Gastrocnemius medialis (tissue), 4 donors: ENCODE measurements at regions of chr9 and their contacts with region 1.

Region 1: DNA sequence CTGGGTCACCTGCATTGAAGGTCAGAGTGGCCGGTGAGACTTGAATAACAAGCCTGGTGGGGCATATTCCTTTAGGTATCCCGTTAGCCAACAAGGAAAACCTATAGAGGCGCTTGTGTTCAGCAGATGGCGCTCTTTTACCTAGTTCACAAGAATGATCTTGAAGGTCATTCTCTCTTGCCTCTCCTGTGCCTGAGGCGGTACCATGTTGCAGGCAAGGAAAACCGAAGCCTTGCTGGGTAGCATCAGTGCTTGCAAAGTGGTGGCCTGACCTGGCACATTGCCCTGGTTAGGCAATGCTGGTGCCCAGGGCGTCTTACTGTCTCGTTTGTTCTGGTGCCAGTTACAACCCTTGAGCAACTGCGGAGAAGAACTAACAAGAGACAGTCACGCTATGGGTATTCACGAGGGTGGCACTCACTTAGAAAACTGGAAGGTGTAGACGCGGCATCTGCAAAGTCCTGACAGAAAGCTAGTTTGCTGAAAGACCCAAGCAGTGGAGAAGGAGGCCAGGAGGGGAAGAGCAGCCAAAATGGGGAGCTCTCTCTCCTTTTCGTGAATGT is 56.7 kb downstream of the AOPEP start:
- DNase-seq: peak; percentile 92 to 99
- ATAC-seq: peak; percentile 94 to 95
- H3K4me3 ChIP-seq: no peak overlapping the region
- H3K27ac ChIP-seq: peak overlapping the region; percentile 53 to 81 (median 74)
- H3K4me1 ChIP-seq: peaks cover 11 to 26% of the 10 kb centered on the region in 2 donors
- H3K27me3 ChIP-seq: no peaks in the 10 kb centered on the region
- CTCF ChIP-seq: peak; percentile 73 to 81 (median 79)
- POLR2A ChIP-seq: peak in 1 of 2 donors; percentile 32

Region 2: DNA sequence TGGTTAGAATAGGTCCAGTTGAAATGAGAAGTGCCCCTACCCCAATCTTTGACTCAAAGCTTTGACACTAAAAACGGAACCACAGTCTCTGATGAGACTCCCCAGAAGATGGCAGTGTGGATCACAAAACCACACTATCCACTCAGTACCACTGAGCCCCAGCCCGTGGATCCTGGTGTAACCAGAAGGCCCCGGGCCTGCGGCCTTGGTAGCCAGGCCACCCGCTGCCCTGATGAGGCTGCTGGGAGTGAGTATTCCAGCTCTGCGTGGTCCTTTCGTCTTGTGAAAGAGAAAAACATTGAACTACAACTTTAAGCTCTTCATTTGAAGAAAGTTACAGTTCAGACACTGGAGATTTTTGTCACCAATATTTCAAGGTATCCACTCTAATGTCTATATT is 101.7 kb before region 1 on chr9:
- in situ Hi-C with region 1: no loop called
- intact Hi-C with region 1: loop called (anchors 5 kb)
- DNase-seq: peak; percentile 54 to 64
- ATAC-seq: peak; percentile 96 to 99
- H3K4me3 ChIP-seq: no peak overlapping the region
- H3K27ac ChIP-seq: peak overlapping the region in 1 of 4 donors; percentile 44
- H3K4me1 ChIP-seq: no peaks in the 10 kb centered on the region
- H3K27me3 ChIP-seq: no peaks in the 10 kb centered on the region
- CTCF ChIP-seq: peak; percentile 46 to 77 (median 72)
- POLR2A ChIP-seq: no peak

Region 3: DNA sequence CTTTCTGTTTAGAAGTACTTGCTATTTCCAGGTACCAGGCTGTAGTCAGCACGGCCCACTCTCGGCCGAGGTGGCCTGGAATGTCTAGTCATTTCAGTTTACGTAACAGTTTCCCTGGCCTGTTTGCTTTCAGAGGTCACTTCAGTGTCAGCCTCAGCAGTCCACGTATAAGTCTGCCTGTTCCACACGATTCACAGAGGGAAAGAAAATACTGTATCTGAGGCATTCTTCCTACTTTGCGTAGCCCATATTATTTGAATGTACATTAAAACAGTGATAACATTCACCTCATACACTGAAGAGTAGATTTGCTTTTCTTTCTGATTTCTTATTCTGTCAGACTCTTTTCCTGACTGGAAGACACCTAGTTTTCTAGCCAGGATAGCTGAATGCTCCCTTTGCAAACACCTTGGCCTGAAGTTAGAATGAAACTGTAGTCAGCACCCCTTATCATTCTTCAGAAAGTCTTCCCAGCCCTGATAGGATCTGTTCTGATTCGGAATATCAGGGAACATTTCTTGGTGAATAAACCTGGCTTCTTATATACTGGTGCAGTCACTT is 84.2 kb after region 1 on chr9:
- in situ Hi-C with region 1: no loop called
- intact Hi-C with region 1: loop called (anchors 2 kb)
- DNase-seq: peak; percentile 61 to 85
- ATAC-seq: peak; percentile 80 to 86
- H3K4me3 ChIP-seq: peak overlapping the region in 3 of 4 donors; percentile 16 to 30 (median 20)
- H3K27ac ChIP-seq: peak overlapping the region; percentile 89 to 96 (median 94)
- H3K4me1 ChIP-seq: peaks cover 73 to 76% of the 10 kb centered on the region in 2 donors
- H3K27me3 ChIP-seq: no peaks in the 10 kb centered on the region
- CTCF ChIP-seq: no peak
- POLR2A ChIP-seq: no peak

Region 4: DNA sequence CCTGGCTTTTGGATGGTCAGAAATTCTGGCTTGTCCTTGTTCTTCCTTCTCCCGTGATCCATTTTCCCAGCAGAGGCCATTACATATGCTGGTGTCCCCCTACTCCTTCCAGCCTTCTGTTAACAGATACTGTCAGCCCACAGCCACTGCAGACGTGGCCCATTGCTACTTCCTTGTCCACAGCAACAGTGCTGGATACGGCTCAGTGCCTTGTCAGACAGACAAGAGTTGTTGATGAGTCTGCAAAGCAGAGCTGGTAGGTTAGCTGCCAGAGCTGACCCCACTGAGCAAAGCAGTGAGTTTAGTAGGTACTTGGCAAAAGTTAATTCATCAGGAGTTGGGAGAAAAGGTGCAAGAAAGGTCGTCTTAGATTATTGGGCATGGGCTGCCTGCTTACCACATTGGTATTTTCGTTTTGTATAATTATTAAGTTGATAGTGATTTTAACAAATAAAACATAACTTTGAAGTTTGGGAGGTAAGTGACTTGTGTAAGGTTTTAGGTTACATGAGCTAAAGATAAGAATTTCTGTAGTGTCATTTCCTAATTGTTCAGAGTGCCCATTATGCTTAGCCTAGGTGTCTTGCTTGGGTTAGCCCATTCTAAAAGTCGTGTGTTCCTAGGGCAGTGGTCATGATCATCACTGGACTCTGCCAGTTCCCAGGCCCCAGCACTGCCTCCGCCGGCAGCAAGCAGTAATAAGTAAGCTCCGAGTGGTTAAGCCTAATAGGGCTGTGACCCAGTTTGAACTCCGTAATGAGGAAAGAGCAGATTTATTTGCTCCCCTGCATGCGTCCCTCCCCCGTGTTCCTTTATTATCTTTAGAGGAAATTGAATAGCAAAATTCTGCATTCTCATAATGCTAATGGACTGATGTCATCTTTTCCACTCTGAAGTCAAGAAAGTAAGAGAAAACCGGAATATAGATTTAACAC is 242.3 kb after region 1 on chr9:
- in situ Hi-C with region 1: loop called in 1 of 4 experiments (anchors 25 kb)
- intact Hi-C with region 1: loop called (anchors 5 kb)
- DNase-seq: peak; percentile 80 to 88
- ATAC-seq: peak; percentile 76 to 78
- H3K4me3 ChIP-seq: peak overlapping the region in 1 of 4 donors; percentile 16
- H3K27ac ChIP-seq: peak overlapping the region; percentile 95 to 98 (median 97)
- H3K4me1 ChIP-seq: peaks cover 95 to 97% of the 10 kb centered on the region in 2 donors
- H3K27me3 ChIP-seq: no peaks in the 10 kb centered on the region
- CTCF ChIP-seq: peak in 4 of 5 experiments; percentile 16 to 49 (median 33)
- POLR2A ChIP-seq: peak in 1 of 2 donors; percentile 38

Region 5: GRCh38 chr9:95073021-95073607 is 289.9 kb after region 1 on chr9:
- in situ Hi-C with region 1: no loop called
- intact Hi-C with region 1: loop called (anchors 5 kb)
- DNase-seq: peak; percentile 53 to 78
- ATAC-seq: peak; percentile 67 to 72
- H3K4me3 ChIP-seq: no peak overlapping the region
- H3K27ac ChIP-seq: peak overlapping the region; percentile 85 to 96 (median 91)
- H3K4me1 ChIP-seq: peaks cover 92 to 95% of the 10 kb centered on the region in 2 donors
- H3K27me3 ChIP-seq: no peaks in the 10 kb centered on the region
- CTCF ChIP-seq: peak in 4 of 5 experiments; percentile 18 to 54 (median 52)
- POLR2A ChIP-seq: no peak

Region 6: DNA sequence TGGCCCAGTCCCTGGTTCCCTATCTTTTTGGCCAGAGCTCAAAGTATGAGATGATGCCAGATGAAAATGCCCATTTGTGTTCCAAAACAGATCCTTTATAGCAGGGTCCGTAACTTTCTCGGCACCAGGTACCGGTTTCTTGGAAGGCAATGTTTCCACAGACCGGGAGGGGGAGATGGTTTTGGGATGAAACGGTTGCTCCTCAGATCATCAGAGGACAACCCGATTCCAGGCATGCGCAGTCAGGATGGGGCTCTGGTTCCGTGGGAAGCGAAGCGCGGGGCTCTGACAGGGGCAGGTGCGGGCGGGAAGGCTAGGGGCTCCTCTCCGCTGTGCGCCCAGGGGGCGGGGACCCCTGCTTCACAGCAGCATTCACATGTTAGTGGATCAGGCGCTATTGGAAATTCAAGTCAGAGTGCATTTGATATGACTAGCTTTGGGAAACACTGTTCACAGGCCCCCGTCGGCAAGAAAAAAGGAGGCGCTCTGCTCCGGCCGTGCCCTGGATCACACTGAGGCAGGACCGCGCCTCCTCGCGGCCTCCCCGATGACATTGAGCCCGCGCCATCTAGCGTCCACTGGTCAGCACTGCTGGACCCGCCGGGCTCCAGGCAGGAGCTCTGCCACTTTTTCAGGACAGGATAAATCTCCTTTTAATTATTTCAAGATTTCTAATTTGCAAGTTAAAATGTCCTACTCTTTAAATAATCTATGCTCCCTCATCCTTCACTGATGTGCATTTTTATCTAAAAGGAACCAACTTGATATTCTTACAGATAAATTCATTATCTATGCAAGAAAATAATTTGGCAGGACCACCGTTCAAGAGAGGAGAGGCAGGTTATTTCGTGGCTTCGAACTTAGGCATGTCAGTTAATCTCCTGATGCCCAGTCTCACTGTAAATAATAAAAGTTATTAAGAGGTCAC is 344.3 kb after region 1 on chr9:
- in situ Hi-C with region 1: loop called (anchors 5 to 10 kb)
- intact Hi-C with region 1: loop called (anchors 1 kb)
- DNase-seq: peak; percentile 77 to 85
- ATAC-seq: peak; percentile 75 to 84
- H3K4me3 ChIP-seq: peak overlapping the region; percentile 42 to 56 (median 45)
- H3K27ac ChIP-seq: peak overlapping the region; percentile 10 to 37 (median 24)
- H3K4me1 ChIP-seq: peaks cover 8 to 14% of the 10 kb centered on the region in 2 donors
- H3K27me3 ChIP-seq: no peaks in the 10 kb centered on the region
- CTCF ChIP-seq: peak; percentile 90 to 99 (median 92)
- POLR2A ChIP-seq: no peak

Region 7: GRCh38 chr9:95147452-95148207 is 364.4 kb after region 1 on chr9:
- in situ Hi-C with region 1: no loop called
- intact Hi-C with region 1: no loop called
- DNase-seq: no peak
- ATAC-seq: no peak
- H3K4me3 ChIP-seq: no peak overlapping the region
- H3K27ac ChIP-seq: no peak overlapping the region
- H3K4me1 ChIP-seq: no peaks in the 10 kb centered on the region
- H3K27me3 ChIP-seq: no peaks in the 10 kb centered on the region
- CTCF ChIP-seq: no peak
- POLR2A ChIP-seq: no peak